A549 (cell line): ENCODE measurements at regions of chr22 and their contacts with region 1.

Region 1: GRCh38 chr22:26763633-26764361 is 106.4 kb downstream of the MIAT start:
- DNase-seq: peak; percentile 80 to 97
- ATAC-seq: peak; percentile 93 to 95
- H3K4me3 ChIP-seq: no peak overlapping the region
- H3K27ac ChIP-seq: peak overlapping the region; percentile 84 to 91
- H3K4me1 ChIP-seq: peaks cover 32% of the 10 kb centered on the region
- CTCF ChIP-seq: peak; percentile 54
- EP300 ChIP-seq: peak in 1 of 2 experiments; percentile 57; a peak in 2 of 5 replicates
- POLR2A ChIP-seq: no peak
- RAD21 ChIP-seq: peak; percentile 85

Region 2: GRCh38 chr22:26672590-26673468 is 91.0 kb before region 1 on chr22:
- CTCF ChIA-PET with region 1: interaction called, 44 read pairs
- POLR2A ChIA-PET with region 1: no interaction called
- DNase-seq: peak; percentile 75 to 94
- ATAC-seq: peak; percentile 91 to 93
- H3K4me3 ChIP-seq: peak overlapping the region; percentile 92
- H3K27ac ChIP-seq: peak overlapping the region; percentile 98 to 99
- H3K4me1 ChIP-seq: peaks cover 18% of the 10 kb centered on the region
- CTCF ChIP-seq: peak; percentile 30
- EP300 ChIP-seq: no peak
- POLR2A ChIP-seq: peak; percentile 23
- RAD21 ChIP-seq: no peak

Region 3: DNA sequence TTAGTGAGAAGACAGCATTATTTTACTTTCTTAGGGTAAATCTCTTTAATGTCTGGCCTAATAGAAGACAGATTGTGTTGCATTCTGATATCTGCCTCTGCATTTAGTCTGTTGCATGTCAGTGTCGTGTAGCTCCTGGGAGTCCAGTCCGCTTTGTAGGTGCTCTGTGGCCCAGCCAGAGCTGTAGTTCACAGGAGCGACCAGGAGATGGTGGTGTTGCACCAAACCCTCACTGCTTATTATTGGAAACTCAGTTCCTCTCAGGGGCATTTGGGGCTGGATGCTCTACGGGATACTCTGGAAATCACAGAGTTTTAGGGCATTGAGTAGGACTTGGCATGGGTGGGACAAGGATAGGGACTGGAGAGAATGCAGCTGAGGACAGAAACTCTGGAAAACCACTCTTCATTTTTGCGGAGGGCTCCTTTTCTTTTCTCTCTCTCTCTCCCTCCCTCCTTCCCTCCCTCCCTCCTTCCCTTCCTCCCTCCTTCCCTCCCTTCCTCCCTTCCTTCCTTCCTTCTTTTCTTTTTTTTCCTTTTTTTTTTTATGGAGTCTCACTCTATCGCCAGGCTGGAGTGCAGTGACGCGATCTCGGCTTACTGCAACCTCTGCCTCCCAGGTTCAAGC is 84.7 kb before region 1 on chr22:
- CTCF ChIA-PET with region 1: interaction called, 44 read pairs
- POLR2A ChIA-PET with region 1: interaction called, 4 read pairs
- DNase-seq: peak; percentile 74 to 82
- ATAC-seq: peak; percentile 93
- H3K4me3 ChIP-seq: no peak overlapping the region
- H3K27ac ChIP-seq: peak overlapping the region; percentile 74 to 86
- H3K4me1 ChIP-seq: peaks cover 38% of the 10 kb centered on the region
- CTCF ChIP-seq: peak; percentile 79
- EP300 ChIP-seq: no peak
- POLR2A ChIP-seq: no peak
- RAD21 ChIP-seq: peak; percentile 96

Region 4: DNA sequence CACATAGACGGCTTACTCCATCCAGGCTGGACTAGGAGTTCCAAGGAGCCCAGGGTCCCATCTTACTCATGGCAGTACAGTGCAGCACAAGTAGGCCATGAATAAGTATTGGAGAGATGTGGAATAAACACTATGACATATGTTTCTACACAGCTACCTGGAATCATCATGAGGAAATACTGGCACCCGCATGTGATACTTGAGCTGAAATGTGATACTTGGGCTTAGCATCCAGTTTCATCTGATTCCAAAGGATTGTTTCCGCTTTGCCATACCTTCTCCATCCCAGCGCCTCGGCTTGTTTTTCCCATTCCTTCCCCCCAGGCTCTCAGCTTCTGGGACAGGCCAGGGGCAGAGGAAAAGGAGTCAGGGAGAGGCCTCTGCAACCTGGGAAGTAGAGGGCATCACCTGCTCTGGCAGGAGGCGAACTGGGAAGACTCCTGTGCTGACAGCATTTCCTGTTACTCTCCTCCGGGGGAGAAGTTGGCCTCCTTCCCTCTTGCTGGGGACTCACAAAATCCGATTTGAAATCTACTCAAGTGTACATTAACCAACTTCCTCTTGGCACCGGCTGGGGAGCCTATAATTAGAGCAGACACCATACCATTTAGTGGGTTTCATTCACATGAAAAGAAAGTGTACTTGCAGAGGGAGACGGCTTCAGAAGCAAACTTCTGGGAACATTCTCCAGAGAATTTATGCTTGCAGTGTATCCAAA is 81.4 kb after region 1 on chr22:
- CTCF ChIA-PET with region 1: no interaction called
- POLR2A ChIA-PET with region 1: no interaction called
- DNase-seq: no peak
- ATAC-seq: no peak
- H3K4me3 ChIP-seq: no peak overlapping the region
- H3K27ac ChIP-seq: no peak overlapping the region
- H3K4me1 ChIP-seq: no peaks in the 10 kb centered on the region
- CTCF ChIP-seq: no peak
- EP300 ChIP-seq: no peak
- POLR2A ChIP-seq: no peak
- RAD21 ChIP-seq: no peak